Posterior cingulate gyrus (tissue), 11 donors: ENCODE measurements at regions of chr1 and their contacts with region 1.

Region 1: GRCh38 chr1:169106095-169106920 is at the start of gene ATP1B1:
- DNase-seq: peak; percentile 80 to 99 (median 90)

Region 2: DNA sequence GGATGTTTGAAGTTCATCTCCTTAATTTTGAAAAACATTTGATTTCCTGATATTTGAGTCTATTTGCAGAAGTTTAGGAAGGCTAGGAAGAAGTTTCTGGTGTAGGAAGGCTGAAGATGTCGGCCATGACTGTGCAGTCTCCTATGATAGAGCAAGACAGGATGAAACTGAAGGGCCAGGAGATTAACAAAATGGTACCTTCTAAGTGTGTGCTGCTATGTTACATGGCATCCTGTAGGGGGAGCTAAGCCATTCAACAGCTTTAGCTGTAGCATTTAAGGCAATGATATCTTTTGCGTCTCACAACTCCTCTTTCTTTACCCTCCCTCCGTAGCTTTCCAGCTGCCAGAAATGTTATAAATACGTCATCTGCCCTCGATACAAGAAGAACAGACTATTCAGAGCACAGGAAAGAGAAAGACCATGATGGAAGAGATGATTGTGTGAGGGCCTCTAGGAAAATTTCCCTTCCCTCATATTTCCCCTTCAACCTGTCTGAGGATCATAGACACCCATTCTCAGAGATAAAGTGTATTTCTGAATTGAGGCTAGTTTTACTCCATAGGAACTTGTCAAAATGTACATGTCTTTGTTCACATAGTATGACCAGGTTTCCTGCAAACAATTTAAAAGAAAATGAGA is 468.8 kb before region 1 on chr1:
- intact Hi-C with region 1: loop called (anchors 5 kb)
- DNase-seq: no peak

Region 3: GRCh38 chr1:168960595-168960994 is 145.7 kb before region 1 on chr1:
- intact Hi-C with region 1: loop called (anchors 5 kb)
- DNase-seq: peak in 6 of 10 donors; percentile 24 to 88 (median 54)